Mammary epithelial cell (primary cell): ENCODE measurements at regions of chr1 and their contacts with region 1.

Region 1: GRCh38 chr1:159945483-159946241 is at the start of gene IGSF9:
- DNase-seq: peak; percentile 93
- H3K4me3 ChIP-seq: peak within 1 kb of the TSS; percentile 47 to 72 (median 65)
- H3K27ac ChIP-seq: peak within 1 kb of the TSS; percentile 53
- H3K4me1 ChIP-seq: peaks cover 33% of the 10 kb centered on the region
- H3K27me3 ChIP-seq: no peaks in the 10 kb centered on the region
- CTCF ChIP-seq: peak; percentile 7 to 53
- total RNA-seq, gene IGSF9: 1.2 to 21.9 TPM

Region 2: GRCh38 chr1:159663552-159663951 is 282.1 kb before region 1 on chr1:
- CTCF ChIA-PET with region 1: no interaction called
- dilution Hi-C with region 1: no loop called
- in situ Hi-C with region 1: no loop called
- intact Hi-C with region 1: no loop called
- DNase-seq: no peak
- H3K4me3 ChIP-seq: no peak overlapping the region
- H3K27ac ChIP-seq: no peak overlapping the region
- H3K4me1 ChIP-seq: no peaks in the 10 kb centered on the region
- H3K27me3 ChIP-seq: no peaks in the 10 kb centered on the region
- CTCF ChIP-seq: no peak

Region 3: DNA sequence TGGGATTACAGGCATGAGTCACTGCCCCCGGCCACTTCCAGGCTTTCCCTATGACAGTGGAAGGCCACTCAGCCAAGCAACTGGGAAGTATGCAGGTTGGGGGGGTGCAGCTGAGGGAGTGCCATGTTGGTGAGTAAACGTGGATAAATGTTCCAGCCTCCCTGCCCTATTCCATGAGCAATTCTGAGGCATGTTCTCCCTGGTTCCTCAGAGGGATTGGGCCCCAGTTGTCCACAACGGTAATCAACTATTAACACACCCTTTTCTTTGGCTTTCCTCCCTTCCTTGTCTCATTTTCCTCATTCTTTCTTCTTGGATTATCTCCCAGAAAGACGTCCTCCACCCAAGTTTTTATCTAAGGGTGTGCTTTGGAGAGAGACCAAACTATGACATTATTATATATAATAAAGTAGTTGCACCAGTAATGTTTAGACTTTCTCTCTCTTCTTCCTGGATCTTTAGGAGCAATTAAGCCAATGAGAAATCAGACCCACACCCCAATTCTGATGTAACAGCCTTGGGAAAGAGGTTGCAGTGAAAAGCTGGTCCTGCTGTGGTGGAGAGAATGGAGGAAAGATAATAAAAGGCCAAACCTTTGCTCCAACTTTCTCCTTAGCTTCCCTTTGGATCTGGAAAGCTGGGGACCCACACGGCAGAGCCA is 15.2 kb after region 1 on chr1:
- CTCF ChIA-PET with region 1: no interaction called
- dilution Hi-C with region 1: no loop called
- in situ Hi-C with region 1: no loop called
- intact Hi-C with region 1: loop called (anchors 1 kb)
- DNase-seq: peak; percentile 81
- H3K4me3 ChIP-seq: peak overlapping the region in 1 of 3 experiments; percentile 17
- H3K27ac ChIP-seq: peak overlapping the region; percentile 71
- H3K4me1 ChIP-seq: peaks cover 22% of the 10 kb centered on the region
- H3K27me3 ChIP-seq: no peaks in the 10 kb centered on the region
- CTCF ChIP-seq: no peak

Region 4: GRCh38 chr1:159989581-159989980 is 43.9 kb after region 1 on chr1:
- CTCF ChIA-PET with region 1: no interaction called
- dilution Hi-C with region 1: loop called (anchors 5 kb)
- in situ Hi-C with region 1: no loop called
- intact Hi-C with region 1: no loop called
- DNase-seq: no peak
- H3K4me3 ChIP-seq: no peak overlapping the region
- H3K27ac ChIP-seq: no peak overlapping the region
- H3K4me1 ChIP-seq: no peaks in the 10 kb centered on the region
- H3K27me3 ChIP-seq: no peaks in the 10 kb centered on the region
- CTCF ChIP-seq: no peak

Region 5: DNA sequence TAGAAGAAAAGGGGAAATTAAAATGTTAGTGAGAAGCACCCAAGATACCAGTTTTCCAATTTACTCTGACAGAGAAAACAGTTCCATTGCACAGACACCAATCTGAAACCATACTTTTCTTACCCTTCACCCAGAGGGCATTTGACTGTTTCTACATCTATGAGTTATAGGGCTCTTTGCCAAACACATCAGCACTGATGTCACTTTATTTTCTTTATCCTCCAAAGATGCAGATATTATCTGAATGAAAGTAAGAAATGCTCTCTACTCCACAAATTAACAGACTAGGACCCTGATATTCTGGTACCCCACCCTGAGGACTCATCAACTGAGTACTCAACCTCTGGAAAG is 363.5 kb after region 1 on chr1:
- CTCF ChIA-PET with region 1: no interaction called
- dilution Hi-C with region 1: no loop called
- in situ Hi-C with region 1: no loop called
- intact Hi-C with region 1: no loop called
- DNase-seq: peak; percentile 11
- H3K4me3 ChIP-seq: no peak overlapping the region
- H3K27ac ChIP-seq: no peak overlapping the region
- H3K4me1 ChIP-seq: no peaks in the 10 kb centered on the region
- H3K27me3 ChIP-seq: no peaks in the 10 kb centered on the region
- CTCF ChIP-seq: no peak